ENCODE measurements at regions of chr5 and their contacts with region 1.

Region 1: GRCh38 chr5:108753877-108754276 is 6.2 kb downstream of the FER start:
- DNase-seq: peak; percentile 74
- H3K4me3 ChIP-seq: peak overlapping the region; percentile 32 to 64 (median 46)
- H3K27ac ChIP-seq: peak overlapping the region; percentile 98
- H3K4me1 ChIP-seq: peaks cover 15% of the 10 kb centered on the region
- H3K27me3 ChIP-seq: no peaks in the 10 kb centered on the region
- CTCF ChIP-seq: no peak

Region 2: GRCh38 chr5:108810741-108811140 is 56.9 kb after region 1 on chr5:
- CTCF ChIA-PET with region 1: interaction called, 16 read pairs
- dilution Hi-C with region 1: no loop called
- in situ Hi-C with region 1: no loop called
- intact Hi-C with region 1: no loop called
- DNase-seq: peak; percentile 20
- H3K4me3 ChIP-seq: no peak overlapping the region
- H3K27ac ChIP-seq: no peak overlapping the region
- H3K4me1 ChIP-seq: peaks cover 4% of the 10 kb centered on the region
- H3K27me3 ChIP-seq: no peaks in the 10 kb centered on the region
- CTCF ChIP-seq: no peak

Measured in mammary epithelial cell (primary cell).